ENCODE measurements at regions of chr11 and their contacts with region 1.

Region 1: DNA sequence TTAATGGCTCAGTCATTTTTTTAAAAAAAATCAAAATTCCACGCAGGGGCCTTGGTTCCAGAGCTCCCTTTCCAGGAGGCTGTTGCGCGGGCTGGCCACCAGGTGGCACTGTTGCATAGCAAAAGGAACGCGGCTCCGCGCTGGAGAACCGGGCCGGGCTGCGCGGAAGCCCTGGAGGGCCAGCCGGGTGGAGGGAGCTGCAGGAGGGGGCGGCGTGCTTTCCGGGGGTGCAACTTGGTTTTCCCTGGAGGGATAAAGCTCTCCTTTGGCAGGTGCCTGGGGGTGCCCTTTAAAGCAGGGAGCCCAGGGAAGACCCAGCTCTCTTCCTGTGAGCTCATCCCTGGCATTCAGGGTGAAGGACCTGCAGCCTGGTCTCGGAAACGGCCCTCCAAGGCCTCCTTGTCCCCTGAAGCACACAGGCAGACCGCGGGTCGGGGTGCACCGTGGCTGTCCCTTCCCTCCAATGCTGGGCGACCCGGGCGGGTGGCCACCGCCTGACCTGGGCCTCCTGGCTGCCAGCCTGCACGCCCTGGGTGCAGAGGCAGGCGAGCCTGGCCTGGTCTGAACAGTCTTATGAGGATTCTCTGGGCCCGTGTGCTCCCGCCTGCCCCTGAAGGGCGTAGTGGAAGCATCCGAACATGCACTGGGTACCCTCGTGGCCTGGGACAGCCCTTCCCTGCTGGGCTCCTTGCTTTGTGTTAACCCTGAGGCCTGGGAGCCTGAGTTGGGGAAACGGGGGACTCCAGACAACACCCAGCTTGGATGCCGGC is 23.4 kb downstream of the KRTAP5-5 start:
- DNase-seq: no peak
- ATAC-seq: peak; percentile 88
- H3K4me3 ChIP-seq: no peak overlapping the region
- H3K27ac ChIP-seq: no peak overlapping the region
- H3K4me1 ChIP-seq: 0 out of 2 replicates have a peak, but pooled peaks cover 2% of the 10 kb centered on the region
- H3K27me3 ChIP-seq: no peaks in the 10 kb centered on the region
- CTCF ChIP-seq: peak; percentile 99

Region 2: GRCh38 chr11:1682225-1682905 is 29.4 kb after region 1 on chr11:
- CTCF ChIA-PET with region 1: interaction called, 16 read pairs
- POLR2A ChIA-PET with region 1: no interaction called
- in situ Hi-C with region 1: no loop called
- intact Hi-C with region 1: no loop called
- DNase-seq: peak; percentile 18
- ATAC-seq: peak; percentile 58
- H3K4me3 ChIP-seq: no peak overlapping the region
- H3K27ac ChIP-seq: peak overlapping the region; percentile 10
- H3K4me1 ChIP-seq: peaks cover 11% of the 10 kb centered on the region
- H3K27me3 ChIP-seq: no peaks in the 10 kb centered on the region
- CTCF ChIP-seq: no peak

Region 3: GRCh38 chr11:1827095-1827813 is 174.3 kb after region 1 on chr11:
- CTCF ChIA-PET with region 1: interaction called, 79 read pairs
- POLR2A ChIA-PET with region 1: no interaction called
- in situ Hi-C with region 1: no loop called
- intact Hi-C with region 1: loop called (anchors 5 kb)
- DNase-seq: no peak
- ATAC-seq: peak; percentile 72
- H3K4me3 ChIP-seq: no peak overlapping the region
- H3K27ac ChIP-seq: peak overlapping the region; percentile 99
- H3K4me1 ChIP-seq: peaks cover 77% of the 10 kb centered on the region
- H3K27me3 ChIP-seq: no peaks in the 10 kb centered on the region
- CTCF ChIP-seq: no peak

Region 4: DNA sequence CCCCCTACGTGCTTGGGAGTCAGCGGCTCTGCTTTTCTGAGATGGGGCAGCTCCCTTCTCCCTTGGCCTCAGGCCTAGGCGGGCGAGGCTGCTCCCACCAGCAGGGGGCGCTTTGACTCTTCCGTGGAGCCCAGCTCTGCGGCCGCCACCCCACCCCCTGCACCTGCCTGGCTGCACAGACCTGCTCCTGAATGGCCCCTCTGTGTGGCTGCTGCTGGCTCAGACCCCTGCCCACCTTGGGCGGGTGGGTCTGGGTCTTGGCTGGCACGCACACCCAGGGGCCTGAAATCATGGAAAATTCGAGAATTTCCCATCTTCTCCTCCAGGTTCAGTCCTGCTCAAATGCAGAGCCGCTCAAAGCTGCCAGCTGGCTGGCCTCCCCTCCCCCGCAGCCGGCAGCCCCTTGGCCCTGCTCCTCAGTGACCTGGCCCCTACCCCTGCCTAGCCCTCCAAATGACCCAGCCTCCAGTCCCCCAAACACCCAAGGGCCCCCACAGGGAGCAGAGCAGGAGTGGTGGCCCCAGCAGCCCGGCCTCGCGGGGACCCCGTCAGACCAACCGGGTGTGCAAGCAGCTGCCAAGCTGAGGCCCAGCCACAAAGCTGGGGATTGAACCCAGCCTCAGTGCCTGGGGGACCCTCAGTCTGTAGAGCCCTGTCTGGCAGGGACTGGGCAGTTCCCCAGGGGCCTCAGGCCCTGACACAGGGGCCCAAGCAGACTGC is 229.7 kb after region 1 on chr11:
- CTCF ChIA-PET with region 1: interaction called, 11 read pairs
- POLR2A ChIA-PET with region 1: no interaction called
- in situ Hi-C with region 1: no loop called
- intact Hi-C with region 1: no loop called
- DNase-seq: peak; percentile 22
- ATAC-seq: peak; percentile 93
- H3K4me3 ChIP-seq: no peak overlapping the region
- H3K27ac ChIP-seq: no peak overlapping the region
- H3K4me1 ChIP-seq: peaks cover 2% of the 10 kb centered on the region; the same call in 1 of the 2 replicates
- H3K27me3 ChIP-seq: no peaks in the 10 kb centered on the region
- CTCF ChIP-seq: peak; percentile 100

Region 5: GRCh38 chr11:2002807-2003206 is 349.9 kb after region 1 on chr11:
- CTCF ChIA-PET with region 1: interaction called, 41 read pairs
- POLR2A ChIA-PET with region 1: no interaction called
- in situ Hi-C with region 1: no loop called
- intact Hi-C with region 1: no loop called
- DNase-seq: no peak
- ATAC-seq: peak; percentile 64
- H3K4me3 ChIP-seq: no peak overlapping the region
- H3K27ac ChIP-seq: no peak overlapping the region
- H3K4me1 ChIP-seq: no peaks in the 10 kb centered on the region
- H3K27me3 ChIP-seq: no peaks in the 10 kb centered on the region
- CTCF ChIP-seq: no peak